ENCODE measurements at regions of chr7 and their contacts with region 1.

Region 1: DNA sequence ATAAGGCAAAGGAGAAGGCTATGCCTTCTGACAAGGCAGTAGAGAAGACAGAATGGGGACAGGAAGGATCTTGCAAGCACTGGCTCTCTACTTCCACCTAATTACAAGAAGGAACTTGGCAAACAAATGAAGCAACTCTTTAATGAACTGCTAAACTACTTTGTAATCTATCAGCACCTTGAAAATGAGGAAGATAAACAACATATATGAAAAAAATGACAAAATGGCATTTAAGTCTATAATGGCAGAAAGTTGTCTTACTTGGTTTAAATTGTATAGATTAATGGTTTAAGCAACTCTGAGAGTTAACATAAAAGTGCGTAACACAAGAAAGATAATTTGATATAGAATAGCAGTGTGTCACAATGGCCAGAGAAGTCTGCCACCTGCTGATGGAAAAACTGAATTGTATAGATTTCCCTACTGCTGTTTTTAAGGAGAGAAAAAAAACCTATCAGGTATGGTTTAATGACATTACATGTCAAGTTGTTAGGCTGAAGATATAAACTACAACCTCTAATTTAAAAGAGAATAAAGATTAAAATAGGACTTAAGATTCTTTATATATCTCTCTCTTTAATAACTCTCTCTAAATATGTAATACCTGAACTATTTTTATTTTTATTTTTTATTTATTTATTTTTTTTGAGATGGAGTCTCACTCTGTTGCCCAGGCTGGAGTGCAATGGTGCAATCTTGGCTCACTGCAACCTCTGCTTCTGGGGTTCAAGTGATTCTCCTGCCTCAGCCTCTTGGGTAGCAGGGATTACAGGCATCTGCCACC is 11.8 kb downstream of the NT5C3A start:
- DNase-seq: no peak
- ATAC-seq: peak; percentile 67 to 92 (median 89)
- H3K4me3 ChIP-seq: peak overlapping the region in 1 of 4 donors; percentile 11
- H3K27ac ChIP-seq: peak overlapping the region in 2 of 4 donors; percentile 64 to 77
- H3K4me1 ChIP-seq: peaks cover 3 to 35% (median 12%) of the 10 kb centered on the region in 3 donors
- H3K27me3 ChIP-seq: no peaks in the 10 kb centered on the region
- CTCF ChIP-seq: peak in 3 of 4 donors; percentile 25 to 34 (median 28)

Region 2: GRCh38 chr7:32803406-32804141 is 247.2 kb before region 1 on chr7:
- intact Hi-C with region 1: loop called in 1 of 3 experiments (anchors 10 kb)
- DNase-seq: no peak
- ATAC-seq: no peak
- H3K4me3 ChIP-seq: no peak overlapping the region
- H3K27ac ChIP-seq: no peak overlapping the region
- H3K4me1 ChIP-seq: no peaks in the 10 kb centered on the region
- H3K27me3 ChIP-seq: no peaks in the 10 kb centered on the region
- CTCF ChIP-seq: no peak